ENCODE measurements at regions of chr7 and their contacts with region 1.

Region 1: DNA sequence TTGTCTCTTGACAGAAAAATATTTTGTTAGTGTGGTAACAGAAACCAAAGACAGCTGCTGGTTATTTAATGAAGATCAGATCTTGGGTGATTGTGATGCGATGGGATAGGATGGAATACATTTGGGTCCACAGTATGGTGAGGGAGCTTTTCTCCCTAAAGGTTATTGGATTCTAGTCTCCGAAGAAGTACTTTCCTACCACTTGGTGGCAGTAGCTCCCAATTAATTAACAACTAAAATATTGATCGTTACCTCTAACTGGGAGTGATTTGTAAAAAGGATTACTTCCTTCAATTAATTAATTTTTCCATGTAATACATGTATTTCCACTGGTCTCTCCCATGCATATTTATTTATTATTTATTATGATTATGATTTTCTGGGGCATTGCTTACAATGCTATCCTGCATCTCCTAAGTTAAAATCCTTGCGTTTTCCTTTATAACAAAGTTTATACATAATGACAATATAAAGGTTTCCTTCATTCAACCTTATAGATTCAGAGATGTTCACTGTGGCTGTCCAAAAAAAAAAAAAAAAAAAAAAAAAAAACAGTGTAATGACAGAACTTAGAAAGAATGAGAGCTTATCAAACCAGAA is 25.6 kb downstream of the TMEM196 start:
- DNase-seq: no peak
- ATAC-seq: peak; percentile 85
- H3K4me3 Mint-ChIP-seq: no peak overlapping the region
- H3K27ac Mint-ChIP-seq: no peak overlapping the region
- H3K4me1 Mint-ChIP-seq: 0 out of 2 replicates have a peak, but pooled peaks cover 3% of the 10 kb centered on the region
- H3K27me3 Mint-ChIP-seq: no peaks in the 10 kb centered on the region
- CTCF ChIP-seq: peak; percentile 36

Region 2: GRCh38 chr7:19708397-19709248 is 39.2 kb before region 1 on chr7 and contains the start of gene POLR1F:
- CTCF ChIA-PET with region 1: interaction called, 25 read pairs
- POLR2A ChIA-PET with region 1: interaction called, 3 read pairs
- DNase-seq: peak; percentile 92
- ATAC-seq: peak; percentile 90
- H3K4me3 Mint-ChIP-seq: peak within 1 kb of the TSS; percentile 94
- H3K27ac Mint-ChIP-seq: peak within 1 kb of the TSS; percentile 93
- H3K4me1 Mint-ChIP-seq: peaks cover 34% of the 10 kb centered on the region
- H3K27me3 Mint-ChIP-seq: peaks cover 6% of the 10 kb centered on the region
- CTCF ChIP-seq: peak; percentile 74
- total RNA-seq, gene POLR1F: 18.6 to 22.3 TPM (median 19.2 TPM) in 3 replicates

Region 3: GRCh38 chr7:19713676-19714075 is 34.2 kb before region 1 on chr7:
- CTCF ChIA-PET with region 1: interaction called, 25 read pairs
- POLR2A ChIA-PET with region 1: interaction called, 3 read pairs
- DNase-seq: peak; percentile 29
- ATAC-seq: no peak
- H3K4me3 Mint-ChIP-seq: no peak overlapping the region
- H3K27ac Mint-ChIP-seq: no peak overlapping the region
- H3K4me1 Mint-ChIP-seq: peaks cover 6% of the 10 kb centered on the region; the same call in 1 of the 2 replicates
- H3K27me3 Mint-ChIP-seq: peaks cover 6% of the 10 kb centered on the region
- CTCF ChIP-seq: peak; percentile 33; the same call in 1 of the 2 replicates

Region 4: DNA sequence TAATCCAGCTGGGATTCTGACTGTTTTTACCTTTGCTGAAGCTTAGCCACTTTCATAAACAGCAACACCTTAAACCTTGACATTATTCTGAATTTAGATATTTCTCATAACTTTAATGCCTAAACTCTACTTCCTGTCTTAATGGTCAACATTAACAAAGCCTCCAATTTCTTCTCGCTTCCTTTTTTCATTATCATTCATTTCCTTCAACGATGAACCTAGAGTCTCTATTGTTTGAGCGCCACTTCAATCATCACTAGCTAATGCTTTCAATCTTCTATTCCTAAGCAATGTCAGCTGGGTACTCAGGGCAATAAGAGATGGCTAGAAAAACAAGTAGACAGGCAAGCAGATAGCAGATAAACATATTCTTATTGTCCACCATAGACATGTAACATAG is 122.1 kb after region 1 on chr7:
- CTCF ChIA-PET with region 1: no interaction called
- POLR2A ChIA-PET with region 1: no interaction called
- DNase-seq: no peak
- ATAC-seq: no peak
- H3K4me3 Mint-ChIP-seq: no peak overlapping the region
- H3K27ac Mint-ChIP-seq: no peak overlapping the region
- H3K4me1 Mint-ChIP-seq: no peaks in the 10 kb centered on the region
- H3K27me3 Mint-ChIP-seq: peaks cover 4% of the 10 kb centered on the region
- CTCF ChIP-seq: no peak

Region 5: DNA sequence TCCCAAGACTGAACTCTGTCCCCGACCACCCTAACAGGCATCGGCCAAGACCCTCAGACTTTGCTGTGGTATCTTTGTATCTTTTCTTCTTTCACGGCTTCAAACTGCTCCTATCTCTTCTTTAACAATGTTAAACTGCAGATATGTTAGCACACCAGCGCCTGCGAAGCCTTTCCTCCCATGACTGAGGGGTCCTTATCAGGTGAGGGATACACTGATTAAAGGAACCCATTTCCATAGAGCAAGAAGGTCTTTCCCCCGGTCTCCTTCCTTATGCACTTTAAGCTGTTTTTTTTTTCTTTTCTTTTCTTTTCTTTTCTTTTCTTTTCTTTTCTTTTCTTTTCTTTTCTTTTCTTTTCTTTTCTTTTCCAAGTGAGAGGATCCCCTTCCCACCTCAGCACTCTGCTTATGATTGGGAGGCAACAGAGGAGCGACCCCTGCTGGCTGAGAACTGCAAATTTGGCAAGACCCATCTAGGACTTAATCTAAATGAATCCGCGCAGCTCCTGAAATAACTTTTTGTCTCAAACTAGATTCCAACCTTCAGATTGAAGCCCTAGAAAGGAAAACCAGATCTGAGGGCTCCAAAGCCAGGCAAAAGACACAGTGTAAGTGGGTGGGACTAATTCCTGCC is 692.7 kb after region 1 on chr7:
- CTCF ChIA-PET with region 1: interaction called, 12 read pairs
- POLR2A ChIA-PET with region 1: no interaction called
- DNase-seq: peak; percentile 81
- ATAC-seq: peak; percentile 76
- H3K4me3 Mint-ChIP-seq: no peak overlapping the region
- H3K27ac Mint-ChIP-seq: no peak overlapping the region
- H3K4me1 Mint-ChIP-seq: peaks cover 9% of the 10 kb centered on the region
- H3K27me3 Mint-ChIP-seq: no peaks in the 10 kb centered on the region
- CTCF ChIP-seq: peak; percentile 59

Measured in WTC11 (cell line).